Activated naive CD4-positive, alpha-beta T cell treated with anti-CD3 and anti-CD28 coated beads for 36 hours (primary cell): ENCODE measurements at regions of chr10 and their contacts with region 1.

Region 1: DNA sequence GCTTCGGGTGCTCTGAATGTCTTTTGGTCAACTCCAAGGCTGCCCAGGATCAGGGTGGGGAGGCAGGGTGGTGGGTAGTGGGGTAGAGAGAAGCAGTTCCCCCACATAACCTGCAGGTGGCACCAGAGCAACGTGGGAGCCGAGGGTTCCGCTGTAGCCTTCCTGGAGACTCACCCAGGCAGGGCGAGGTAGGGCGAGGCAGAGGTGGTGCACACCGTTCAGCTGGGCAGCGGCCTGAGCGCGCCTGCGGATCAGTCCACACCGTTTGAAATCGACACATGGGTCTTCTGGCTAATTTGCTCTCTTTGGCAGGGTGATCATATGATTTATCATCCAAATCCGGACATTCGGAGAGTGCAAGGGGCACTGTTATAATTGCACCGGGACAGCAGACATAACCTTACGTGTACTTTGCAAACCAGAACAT is 41.4 kb upstream of the MAP3K8 start:
- DNase-seq: peak; percentile 82
- H3K4me3 Mint-ChIP-seq: no peak overlapping the region
- H3K27ac Mint-ChIP-seq: no peak overlapping the region
- H3K4me1 Mint-ChIP-seq: peaks cover 3% of the 10 kb centered on the region
- H3K27me3 Mint-ChIP-seq: peaks cover 5% of the 10 kb centered on the region

Region 2: DNA sequence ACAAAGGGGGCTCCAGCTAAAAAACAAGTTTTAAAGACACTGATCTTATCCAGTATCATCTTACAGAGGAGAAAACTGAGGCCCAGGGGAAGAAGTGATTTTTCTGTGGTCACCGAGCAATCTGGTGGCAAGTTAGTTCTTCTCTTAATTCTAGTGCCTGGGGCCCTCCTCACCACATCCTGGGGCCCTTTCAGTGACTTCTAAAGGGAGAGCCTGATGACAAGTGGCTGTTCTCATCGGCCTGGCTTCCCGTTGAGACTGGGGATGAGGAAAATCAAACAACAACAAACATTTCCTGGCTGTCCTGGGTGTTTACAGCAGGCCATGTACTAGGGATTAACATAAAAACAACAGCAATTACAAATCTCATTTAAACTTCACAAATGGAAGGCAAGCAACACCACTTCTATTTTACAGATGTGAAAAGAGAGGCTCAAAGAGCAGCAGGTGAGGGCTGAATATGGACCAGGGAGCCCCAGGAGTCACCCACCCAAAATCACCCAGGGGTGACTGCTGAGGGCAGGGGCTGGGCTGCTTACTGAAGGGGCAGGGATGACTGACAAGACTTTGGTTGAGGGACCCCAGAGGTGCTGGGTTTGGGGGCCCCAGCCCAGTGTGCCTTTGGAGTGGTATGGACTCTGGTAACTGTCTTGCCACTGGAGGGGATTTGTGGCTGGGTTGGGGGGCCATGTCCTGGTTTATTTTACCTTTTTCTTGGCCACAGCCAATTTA is 18.8 kb before region 1 on chr10:
- CTCF ChIA-PET with region 1: interaction called, 10 read pairs
- intact Hi-C with region 1: no loop called
- DNase-seq: peak; percentile 77
- H3K4me3 Mint-ChIP-seq: no peak overlapping the region
- H3K27ac Mint-ChIP-seq: peak overlapping the region; percentile 74
- H3K4me1 Mint-ChIP-seq: peaks cover 25% of the 10 kb centered on the region
- H3K27me3 Mint-ChIP-seq: no peaks in the 10 kb centered on the region

Region 3: GRCh38 chr10:30413996-30414576 is 21.5 kb after region 1 on chr10:
- CTCF ChIA-PET with region 1: interaction called, 8 read pairs
- intact Hi-C with region 1: loop called (anchors 1 kb)
- DNase-seq: peak; percentile 43
- H3K4me3 Mint-ChIP-seq: no peak overlapping the region
- H3K27ac Mint-ChIP-seq: no peak overlapping the region
- H3K4me1 Mint-ChIP-seq: peaks cover 15% of the 10 kb centered on the region
- H3K27me3 Mint-ChIP-seq: no peaks in the 10 kb centered on the region

Region 4: GRCh38 chr10:30562787-30563186 is 170.2 kb after region 1 on chr10:
- CTCF ChIA-PET with region 1: no interaction called
- intact Hi-C with region 1: no loop called
- DNase-seq: peak; percentile 48
- H3K4me3 Mint-ChIP-seq: no peak overlapping the region
- H3K27ac Mint-ChIP-seq: no peak overlapping the region
- H3K4me1 Mint-ChIP-seq: no peaks in the 10 kb centered on the region
- H3K27me3 Mint-ChIP-seq: peaks cover 5% of the 10 kb centered on the region

Region 5: DNA sequence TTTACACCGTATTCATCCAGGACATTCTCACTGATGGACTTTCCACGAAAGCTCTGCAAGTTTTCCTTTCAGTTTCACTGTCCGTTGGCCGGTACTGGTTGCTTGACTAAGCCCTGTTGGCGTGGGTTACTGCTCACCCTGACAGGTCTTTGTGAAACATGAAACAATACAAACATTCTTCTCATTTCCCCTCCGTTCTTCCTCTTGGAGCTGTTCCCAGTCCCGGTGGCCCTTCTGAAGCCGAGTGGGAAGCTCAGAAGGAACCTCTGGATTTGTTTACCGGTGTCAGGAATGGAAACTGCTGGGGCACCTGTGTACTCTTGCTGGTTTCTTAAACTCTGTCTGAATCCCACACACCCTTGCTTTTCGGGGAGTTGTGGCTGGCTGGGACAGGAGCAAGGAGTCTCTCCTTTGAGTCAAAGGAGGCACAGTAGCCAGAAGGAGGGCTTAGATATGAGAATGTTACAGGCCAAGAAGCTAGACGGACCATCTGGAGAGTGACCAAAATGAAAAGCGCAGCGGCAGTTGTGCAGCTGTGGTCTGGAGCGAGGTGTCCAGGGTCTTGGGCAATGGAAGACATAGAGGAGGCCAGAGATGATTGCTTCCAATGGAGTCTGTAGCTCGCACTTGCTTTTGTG is 191.3 kb after region 1 on chr10:
- CTCF ChIA-PET with region 1: interaction called, 13 read pairs
- intact Hi-C with region 1: loop called (anchors 2 kb)
- DNase-seq: no peak
- H3K4me3 Mint-ChIP-seq: no peak overlapping the region
- H3K27ac Mint-ChIP-seq: no peak overlapping the region
- H3K4me1 Mint-ChIP-seq: peaks cover 3% of the 10 kb centered on the region
- H3K27me3 Mint-ChIP-seq: no peaks in the 10 kb centered on the region

Region 6: DNA sequence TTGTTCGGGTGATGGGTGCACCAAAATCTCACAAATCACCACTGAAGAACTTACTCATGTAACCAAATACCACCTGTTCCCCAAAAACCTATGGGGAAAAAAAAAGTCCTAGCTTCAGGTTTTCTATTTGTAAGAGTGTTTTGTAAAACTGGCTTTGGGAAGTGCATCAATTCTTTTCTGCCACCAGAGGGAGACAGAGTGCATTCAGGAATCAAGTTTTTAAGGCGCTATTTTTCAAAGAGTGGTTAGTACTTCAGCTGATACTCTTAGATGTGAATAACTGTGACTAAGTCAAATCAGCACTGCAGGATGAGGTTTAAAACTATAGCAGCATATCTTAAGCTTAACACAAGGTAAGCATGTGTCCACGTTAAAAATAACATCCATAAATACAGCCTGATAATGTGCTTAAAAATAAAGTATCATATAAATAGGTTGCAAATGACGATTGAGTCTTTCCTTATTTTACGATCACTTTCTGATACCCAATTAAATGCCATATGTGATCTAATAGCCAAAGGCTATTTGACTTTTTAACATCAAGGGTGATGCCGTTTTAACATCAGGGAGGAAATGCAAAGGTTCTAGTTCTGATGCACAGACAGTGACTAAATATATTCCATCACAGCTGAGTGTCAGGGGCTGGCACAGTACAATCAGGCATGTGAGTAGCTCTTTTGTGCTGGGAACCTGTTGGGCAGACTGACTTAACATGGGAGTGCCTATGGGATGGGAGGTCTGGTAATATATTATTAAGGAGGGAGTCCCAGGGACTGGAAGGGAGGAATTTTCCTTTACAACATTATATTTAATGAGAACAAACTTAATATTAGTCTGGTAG is 247.6 kb after region 1 on chr10:
- CTCF ChIA-PET with region 1: interaction called, 11 read pairs
- intact Hi-C with region 1: loop called (anchors 1 kb)
- DNase-seq: peak; percentile 28
- H3K4me3 Mint-ChIP-seq: no peak overlapping the region
- H3K27ac Mint-ChIP-seq: no peak overlapping the region
- H3K4me1 Mint-ChIP-seq: peaks cover 3% of the 10 kb centered on the region
- H3K27me3 Mint-ChIP-seq: peaks cover 26% of the 10 kb centered on the region